HCT116 (cell line): ENCODE measurements at regions of chr17 and their contacts with region 1.

Region 1: DNA sequence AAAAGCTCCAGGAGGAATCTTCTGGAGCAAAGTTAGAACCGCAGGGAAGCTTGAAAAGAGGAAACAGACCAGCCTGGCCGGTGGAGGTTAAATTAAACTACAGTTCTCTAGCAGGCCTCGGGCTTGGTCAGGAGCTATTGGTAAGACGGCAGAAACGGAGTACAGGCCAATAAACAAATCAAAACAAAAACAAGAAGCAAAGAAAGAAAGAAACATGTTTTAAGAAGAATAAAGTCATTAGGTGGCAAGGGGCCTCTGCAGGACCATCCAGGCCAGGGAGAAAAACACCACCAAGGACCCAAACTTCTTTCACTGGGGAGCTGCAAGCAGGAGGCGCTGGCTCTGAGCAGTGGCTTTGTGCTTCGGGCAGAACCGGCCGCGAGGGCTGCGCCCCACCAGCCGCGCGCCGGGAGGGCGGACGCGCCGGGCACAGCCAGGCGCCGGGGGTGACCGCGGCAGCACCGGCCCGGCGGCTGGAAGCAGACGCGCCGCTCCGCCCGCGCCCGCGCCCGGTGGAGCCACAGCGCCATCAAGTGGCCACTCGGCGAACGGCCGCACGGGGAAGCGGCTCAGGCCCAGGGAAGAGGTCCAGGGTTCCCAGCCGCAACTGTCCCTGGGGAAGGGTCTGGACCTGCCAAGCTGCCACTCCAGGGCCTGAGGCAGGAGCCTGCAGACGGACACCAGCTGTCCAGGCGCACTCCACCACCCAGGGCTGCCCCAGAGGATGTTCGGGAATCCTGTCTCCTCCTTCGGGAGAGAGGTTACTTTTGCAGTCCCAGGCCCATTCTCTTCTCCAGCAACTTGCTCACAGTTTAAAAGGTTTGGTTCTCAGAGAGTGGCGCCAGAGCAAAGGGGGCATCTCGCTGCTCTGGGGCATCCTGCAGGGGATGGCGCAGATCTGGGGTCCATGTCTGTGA is 419.4 kb downstream of the SOX9 start:
- DNase-seq: peak; percentile 45
- ATAC-seq: peak; percentile 93
- H3K4me3 ChIP-seq: peak overlapping the region; percentile 19 to 23
- H3K27ac ChIP-seq: peak overlapping the region; percentile 34
- H3K4me1 ChIP-seq: peaks cover 7 to 18% of the 10 kb centered on the region in 2 experiments
- H3K27me3 ChIP-seq: no peaks in the 10 kb centered on the region
- CTCF ChIP-seq: peak; percentile 45 to 91 (median 78); a peak in 5 of 6 replicates
- POLR2A ChIP-seq: no peak
- RAD21 ChIP-seq: peak; percentile 95

Region 2: GRCh38 chr17:71084219-71084618 is 1456.0 kb before region 1 on chr17:
- CTCF ChIA-PET with region 1: no interaction called
- POLR2A ChIA-PET with region 1: no interaction called
- RAD21 ChIA-PET with region 1: no interaction called
- intact Hi-C with region 1: loop called (anchors 10 kb)
- DNase-seq: peak; percentile 69
- ATAC-seq: peak; percentile 87
- H3K4me3 ChIP-seq: no peak overlapping the region
- H3K27ac ChIP-seq: no peak overlapping the region
- H3K4me1 ChIP-seq: peaks cover 0 to 6% of the 10 kb centered on the region in 2 experiments; a peak in 1 of 4 replicates
- H3K27me3 ChIP-seq: no peaks in the 10 kb centered on the region
- CTCF ChIP-seq: peak; percentile 69 to 78 (median 73); a peak in 5 of 6 replicates
- POLR2A ChIP-seq: no peak
- RAD21 ChIP-seq: peak; percentile 85

Region 3: GRCh38 chr17:71237903-71238538 is 1302.2 kb before region 1 on chr17:
- CTCF ChIA-PET with region 1: no interaction called
- POLR2A ChIA-PET with region 1: no interaction called
- RAD21 ChIA-PET with region 1: no interaction called
- intact Hi-C with region 1: loop called (anchors 2 kb)
- DNase-seq: peak; percentile 57
- ATAC-seq: peak; percentile 96
- H3K4me3 ChIP-seq: no peak overlapping the region
- H3K27ac ChIP-seq: no peak overlapping the region
- H3K4me1 ChIP-seq: no peaks in the 10 kb centered on the region
- H3K27me3 ChIP-seq: no peaks in the 10 kb centered on the region
- CTCF ChIP-seq: peak; percentile 38 to 66 (median 64)
- POLR2A ChIP-seq: no peak
- RAD21 ChIP-seq: peak; percentile 89

Region 4: DNA sequence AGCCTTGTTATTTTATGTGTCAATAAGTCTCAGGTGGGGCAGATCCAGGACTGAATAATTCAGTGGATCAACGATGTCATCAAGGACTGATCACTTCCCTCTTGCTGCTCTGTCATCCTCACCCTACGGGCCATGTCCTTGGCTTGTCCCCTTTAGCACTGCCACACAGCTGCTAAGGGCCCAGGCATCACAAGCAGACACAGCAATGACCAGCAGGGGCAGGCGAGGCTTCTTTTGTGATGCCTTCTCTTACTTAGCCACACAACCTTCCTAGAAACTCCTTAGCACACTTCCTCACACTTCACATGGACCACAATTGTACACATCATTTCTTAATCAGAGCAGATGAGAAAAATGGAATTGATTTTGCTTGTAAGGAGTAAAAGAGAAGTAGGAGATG is 775.7 kb before region 1 on chr17:
- CTCF ChIA-PET with region 1: no interaction called
- POLR2A ChIA-PET with region 1: no interaction called
- RAD21 ChIA-PET with region 1: no interaction called
- intact Hi-C with region 1: loop called (anchors 5 kb)
- DNase-seq: peak; percentile 62
- ATAC-seq: peak; percentile 100
- H3K4me3 ChIP-seq: no peak overlapping the region
- H3K27ac ChIP-seq: no peak overlapping the region
- H3K4me1 ChIP-seq: peaks cover 0 to 9% of the 10 kb centered on the region in 2 experiments; a peak in 2 of 4 replicates
- H3K27me3 ChIP-seq: no peaks in the 10 kb centered on the region
- CTCF ChIP-seq: peak; percentile 56 to 96 (median 92); a peak in 5 of 6 replicates
- POLR2A ChIP-seq: no peak
- RAD21 ChIP-seq: peak; percentile 81